ENCODE measurements at regions of chr9 and their contacts with region 1.

Region 1: GRCh38 chr9:134689321-134690181 is 47.9 kb downstream of the COL5A1 start:
- DNase-seq: peak; percentile 70 to 76
- ATAC-seq: peak; percentile 71 to 89 (median 82)
- H3K4me3 ChIP-seq: no peak overlapping the region
- H3K27ac ChIP-seq: peak overlapping the region in 5 of 10 donors; percentile 19 to 52 (median 29)
- H3K4me1 ChIP-seq: peaks cover 0 to 38% (median 15%) of the 10 kb centered on the region in 9 donors
- H3K27me3 ChIP-seq: no peaks in the 10 kb centered on the region
- CTCF ChIP-seq: peak; percentile 66 to 87 (median 81)

Region 2: DNA sequence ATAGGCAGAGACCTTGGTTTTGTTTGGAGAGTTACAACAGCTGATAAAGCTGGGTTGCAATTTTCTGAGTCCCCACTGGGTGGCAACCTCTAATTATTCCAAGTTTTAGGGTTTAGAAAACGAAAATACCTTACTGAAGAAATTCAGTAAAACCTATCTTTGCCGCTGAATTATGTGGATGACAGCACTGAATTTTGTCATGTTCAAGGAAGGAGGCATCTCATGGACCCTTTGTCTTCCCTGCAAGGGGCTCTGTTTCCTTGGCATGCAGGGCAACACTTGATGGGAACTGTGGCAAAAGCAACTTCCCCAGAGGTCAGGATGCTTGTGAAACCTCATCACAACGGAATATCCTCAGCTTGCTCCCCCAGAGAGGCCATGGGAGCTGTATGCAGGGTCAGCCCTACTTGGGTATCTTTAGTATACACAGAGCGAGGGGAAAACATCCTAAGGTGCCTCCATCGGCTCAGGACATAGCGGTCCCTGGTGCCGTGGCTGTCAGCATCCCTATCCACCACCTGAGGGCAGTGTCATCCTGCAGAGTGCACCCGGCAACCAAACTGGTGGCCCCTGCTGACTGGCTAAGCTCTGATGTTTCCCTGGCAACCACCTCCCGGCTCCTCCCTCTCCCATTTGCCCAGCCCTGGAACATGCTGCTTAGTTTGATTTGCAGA is 240.2 kb before region 1 on chr9:
- intact Hi-C with region 1: loop called in 2 of 10 experiments (anchors 5 kb)
- DNase-seq: peak; percentile 87 to 94
- ATAC-seq: peak; percentile 93 to 97 (median 96)
- H3K4me3 ChIP-seq: no peak overlapping the region
- H3K27ac ChIP-seq: no peak overlapping the region
- H3K4me1 ChIP-seq: peaks cover 0 to 6% (median 0%) of the 10 kb centered on the region in 9 donors
- H3K27me3 ChIP-seq: no peaks in the 10 kb centered on the region
- CTCF ChIP-seq: peak; percentile 86 to 96 (median 93)

Region 3: DNA sequence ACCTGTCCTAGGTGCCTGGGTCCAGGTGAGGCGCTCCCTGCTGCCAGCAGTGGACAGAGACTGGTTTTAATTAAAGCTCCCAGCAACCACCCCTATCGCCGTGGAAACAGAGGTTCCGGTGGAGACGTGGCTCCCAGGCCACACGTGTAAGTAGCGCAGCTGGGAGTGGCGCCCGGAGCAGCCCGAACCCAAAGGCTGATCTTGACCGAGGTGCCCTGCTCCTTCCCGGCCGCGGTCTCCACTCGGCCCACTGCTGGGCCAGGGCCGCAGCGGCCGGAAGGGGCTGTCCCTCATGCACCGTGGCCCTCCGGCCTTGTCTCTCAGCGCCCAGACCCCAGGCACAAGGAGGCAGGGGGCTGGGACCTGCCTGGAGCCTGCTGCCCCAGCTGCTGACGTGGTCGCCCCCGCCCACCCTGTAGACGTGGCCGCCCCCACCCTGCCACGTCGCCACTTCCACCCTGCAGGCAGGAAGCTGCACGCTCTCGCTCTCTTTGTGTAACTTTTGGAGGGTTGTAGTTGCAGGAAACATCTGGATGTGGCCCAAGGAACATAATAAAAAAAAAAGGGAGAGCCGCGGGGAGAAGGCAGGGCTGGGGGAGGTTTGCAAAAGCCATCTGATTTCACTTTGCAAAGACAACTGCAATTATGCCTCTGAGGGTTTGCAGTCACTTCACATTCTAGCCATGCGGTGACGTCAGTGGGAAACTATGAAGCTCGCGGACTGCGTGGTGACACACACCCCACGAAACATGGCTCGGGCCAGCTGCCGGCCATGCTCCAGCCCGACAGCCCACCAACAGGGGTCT is 233.4 kb before region 1 on chr9:
- intact Hi-C with region 1: loop called in 1 of 10 experiments (anchors 5 kb)
- DNase-seq: peak; percentile 84 to 91
- ATAC-seq: peak; percentile 84 to 94 (median 90)
- H3K4me3 ChIP-seq: peak overlapping the region in 9 of 10 donors; percentile 21 to 51 (median 39)
- H3K27ac ChIP-seq: peak overlapping the region; percentile 81 to 97 (median 92)
- H3K4me1 ChIP-seq: peaks cover 14 to 46% (median 33%) of the 10 kb centered on the region in 9 donors
- H3K27me3 ChIP-seq: no peaks in the 10 kb centered on the region
- CTCF ChIP-seq: peak in 1 of 9 donors; percentile 15

Region 4: DNA sequence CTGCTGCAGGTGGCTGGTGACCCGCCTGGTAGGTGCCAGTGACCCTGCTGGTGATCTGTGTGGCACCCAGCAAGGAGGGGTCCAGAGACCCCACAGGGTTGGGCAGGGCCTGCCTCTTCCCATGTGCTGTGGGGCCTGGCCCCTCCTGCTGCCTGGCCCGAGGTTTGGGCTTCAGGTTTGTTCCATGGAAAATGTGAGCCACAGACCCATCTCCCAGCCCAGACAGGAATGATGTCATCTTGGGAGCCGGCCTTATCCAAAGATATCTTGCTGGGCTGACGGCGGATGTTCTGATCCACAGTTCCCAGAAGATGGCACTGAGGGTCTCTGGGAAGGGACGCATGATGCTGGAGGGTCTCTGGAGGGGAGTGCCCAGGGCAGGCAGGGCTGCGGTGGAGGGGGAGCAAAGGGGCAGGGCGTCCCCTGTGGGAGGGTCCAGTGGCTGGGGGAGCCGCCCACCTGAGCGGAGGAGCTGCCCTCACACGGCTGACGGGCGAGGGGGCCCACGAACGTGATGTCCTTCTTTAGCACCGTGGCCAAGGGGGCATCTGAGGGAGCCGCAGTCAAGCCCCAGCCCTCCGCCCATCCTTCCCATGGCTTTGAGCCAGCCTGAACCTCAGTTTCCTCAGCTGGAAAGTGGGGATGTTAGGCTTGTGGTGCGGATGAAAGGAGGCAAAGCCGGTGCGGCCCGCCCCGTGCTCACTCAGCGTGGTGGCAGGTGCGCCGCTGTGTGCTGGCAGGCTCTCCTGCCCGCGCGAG is 20.1 kb after region 1 on chr9:
- intact Hi-C with region 1: no loop called
- DNase-seq: peak; percentile 23 to 76
- ATAC-seq: peak; percentile 30 to 76 (median 48)
- H3K4me3 ChIP-seq: no peak overlapping the region
- H3K27ac ChIP-seq: peak overlapping the region in 8 of 10 donors; percentile 46 to 85 (median 64)
- H3K4me1 ChIP-seq: peaks cover 21 to 63% (median 31%) of the 10 kb centered on the region in 9 donors
- H3K27me3 ChIP-seq: peaks cover 0 to 4% (median 0%) of the 10 kb centered on the region in 7 donors
- CTCF ChIP-seq: no peak

Region 5: GRCh38 chr9:134751622-134752021 is 62.1 kb after region 1 on chr9:
- intact Hi-C with region 1: no loop called
- DNase-seq: no peak
- ATAC-seq: no peak
- H3K4me3 ChIP-seq: no peak overlapping the region
- H3K27ac ChIP-seq: no peak overlapping the region
- H3K4me1 ChIP-seq: no peaks in the 10 kb centered on the region
- H3K27me3 ChIP-seq: no peaks in the 10 kb centered on the region
- CTCF ChIP-seq: no peak

Region 6: DNA sequence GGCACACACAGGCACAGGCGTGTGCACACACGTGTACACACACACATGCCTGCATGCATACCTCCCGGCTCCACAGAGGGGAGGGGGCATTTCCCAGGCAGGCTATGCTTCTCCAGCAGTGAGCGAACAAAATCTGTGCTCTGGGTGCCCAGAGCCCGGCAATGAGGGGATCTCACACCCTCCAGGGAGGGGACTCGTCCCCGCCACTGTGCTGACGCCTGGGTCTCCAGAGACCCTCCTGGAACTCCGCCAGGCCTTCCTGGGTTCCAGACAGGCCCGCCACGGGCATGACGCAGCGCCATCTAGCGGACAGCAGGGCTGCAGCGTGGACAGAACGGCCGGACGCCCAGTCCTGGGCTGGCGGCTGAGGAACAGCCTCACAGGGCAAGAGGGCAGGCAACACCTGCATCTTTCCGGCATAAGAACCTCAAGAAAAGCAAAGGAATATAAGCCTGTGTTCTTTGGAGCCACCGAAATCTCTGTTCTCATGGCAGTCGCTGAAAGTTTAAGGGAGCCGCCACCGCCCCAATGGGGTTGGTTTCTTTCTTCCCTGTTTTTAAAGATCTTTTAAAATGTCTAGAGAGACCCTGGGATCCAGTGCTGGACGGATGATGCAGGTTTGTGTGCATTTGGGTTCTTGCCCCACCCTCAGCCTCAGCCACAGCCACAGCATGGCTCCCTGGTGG is 654.4 kb after region 1 on chr9:
- intact Hi-C with region 1: loop called in 2 of 10 experiments (anchors 5 to 10 kb)
- DNase-seq: peak; percentile 63 to 80
- ATAC-seq: peak; percentile 56 to 88 (median 72)
- H3K4me3 ChIP-seq: no peak overlapping the region
- H3K27ac ChIP-seq: no peak overlapping the region
- H3K4me1 ChIP-seq: peaks cover 0 to 10% (median 0%) of the 10 kb centered on the region in 9 donors
- H3K27me3 ChIP-seq: peaks cover 11 to 97% (median 59%) of the 10 kb centered on the region in 7 donors
- CTCF ChIP-seq: peak; percentile 75 to 97 (median 94)